Right cardiac atrium (tissue), 5 donors: ENCODE measurements at regions of chr1 and their contacts with region 1.

Region 1: DNA sequence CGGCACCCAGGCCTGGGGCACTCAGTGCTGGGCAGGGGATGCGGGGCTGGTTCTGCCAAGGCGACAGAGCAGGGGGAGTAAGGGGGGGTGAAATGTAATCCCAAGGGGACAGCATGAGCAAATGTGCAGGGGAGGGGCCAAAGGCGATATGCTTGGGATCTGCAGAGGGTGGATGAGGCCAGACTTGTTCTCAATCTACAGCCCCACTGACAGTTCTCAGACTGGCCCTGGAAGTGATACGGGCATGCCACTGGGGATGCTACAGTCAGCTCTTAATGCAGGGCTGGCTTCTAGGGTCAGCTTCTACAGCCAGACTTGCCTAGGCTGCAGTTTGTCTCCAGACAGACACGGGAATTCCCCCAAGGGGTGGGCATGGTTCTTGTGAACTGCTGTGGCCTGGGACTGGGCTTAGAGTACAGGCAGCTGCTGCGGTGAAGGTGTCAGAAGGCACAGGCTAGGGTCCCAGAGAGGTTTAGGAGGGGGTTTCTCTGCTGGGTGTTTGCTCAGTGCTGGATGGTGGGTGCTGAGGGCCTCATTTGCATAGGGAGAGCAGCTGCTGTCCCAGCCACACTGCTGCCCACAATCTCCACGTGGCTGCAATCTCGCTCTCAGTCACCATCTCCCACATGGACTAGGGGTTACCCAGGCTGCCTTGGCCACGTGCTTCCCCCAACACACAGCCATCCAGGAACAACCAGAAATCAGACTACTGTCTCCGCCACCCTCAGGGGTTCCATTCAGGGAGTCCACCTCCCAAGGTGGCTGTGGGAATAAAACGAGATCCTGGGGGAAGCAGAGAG is 190.1 kb downstream of the HIVEP3 start:
- DNase-seq: peak in 1 of 3 donors; percentile 50
- ATAC-seq: peak; percentile 11 to 18
- H3K4me3 ChIP-seq: no peak overlapping the region
- H3K27ac ChIP-seq: no peak overlapping the region
- H3K4me1 ChIP-seq: peaks cover 17% of the 10 kb centered on the region
- H3K27me3 ChIP-seq: no peaks in the 10 kb centered on the region

Region 2: DNA sequence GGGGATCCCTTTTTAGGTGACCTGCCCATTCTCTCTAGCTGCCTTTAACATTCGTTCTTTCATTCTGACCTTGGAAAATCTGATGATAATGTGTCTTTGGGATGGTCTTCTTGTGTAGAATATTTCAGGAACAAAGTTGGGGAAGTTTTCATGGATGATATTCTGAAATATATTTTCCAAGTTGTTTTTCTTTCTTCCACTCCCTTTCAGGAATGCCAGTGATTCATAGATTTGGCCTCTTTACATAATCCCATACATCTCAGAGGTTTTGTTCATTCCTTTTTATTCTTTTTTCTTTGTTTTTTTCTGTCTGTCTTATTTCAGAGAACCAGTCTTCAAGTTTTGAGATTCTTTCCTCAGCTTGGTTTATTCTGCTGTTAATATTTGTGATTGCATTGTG is 472.6 kb before region 1 on chr1:
- intact Hi-C with region 1: loop called in 1 of 4 experiments (anchors 10 kb)
- DNase-seq: no peak
- ATAC-seq: no peak
- H3K4me3 ChIP-seq: no peak overlapping the region
- H3K27ac ChIP-seq: no peak overlapping the region
- H3K4me1 ChIP-seq: no peaks in the 10 kb centered on the region
- H3K27me3 ChIP-seq: no peaks in the 10 kb centered on the region

Region 3: DNA sequence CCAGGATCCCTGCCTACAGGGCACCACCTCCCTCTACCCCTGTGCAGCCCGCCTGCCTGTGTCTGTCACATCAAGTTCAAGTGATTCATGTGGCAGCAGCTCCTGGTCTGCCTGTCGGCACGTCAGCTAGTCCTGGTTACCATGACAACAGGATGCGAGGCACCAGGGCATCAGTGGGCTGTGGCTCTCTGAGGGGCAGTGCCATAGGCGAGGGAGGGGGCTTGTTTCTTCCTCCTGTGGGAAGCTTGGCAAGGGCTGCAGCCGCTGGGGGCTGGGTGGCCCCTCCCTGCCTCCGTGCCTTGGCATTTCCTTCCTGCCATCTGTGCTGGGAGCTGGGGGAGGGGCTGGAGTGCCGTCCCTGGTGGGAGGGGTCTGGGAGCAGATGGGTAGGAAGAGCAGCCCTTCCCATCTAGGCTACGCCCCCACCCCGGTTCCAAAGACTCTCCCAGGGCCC is 324.3 kb before region 1 on chr1:
- intact Hi-C with region 1: no loop called
- DNase-seq: peak in 2 of 3 donors; percentile 68 to 70
- ATAC-seq: peak; percentile 27 to 36
- H3K4me3 ChIP-seq: no peak overlapping the region
- H3K27ac ChIP-seq: no peak overlapping the region
- H3K4me1 ChIP-seq: no peaks in the 10 kb centered on the region
- H3K27me3 ChIP-seq: no peaks in the 10 kb centered on the region

Region 4: GRCh38 chr1:42586016-42586415 is 857.4 kb after region 1 on chr1:
- intact Hi-C with region 1: no loop called
- DNase-seq: no peak
- ATAC-seq: no peak
- H3K4me3 ChIP-seq: no peak overlapping the region
- H3K27ac ChIP-seq: no peak overlapping the region
- H3K4me1 ChIP-seq: no peaks in the 10 kb centered on the region
- H3K27me3 ChIP-seq: no peaks in the 10 kb centered on the region